ENCODE measurements at regions of chr16 and their contacts with region 1.

Region 1: DNA sequence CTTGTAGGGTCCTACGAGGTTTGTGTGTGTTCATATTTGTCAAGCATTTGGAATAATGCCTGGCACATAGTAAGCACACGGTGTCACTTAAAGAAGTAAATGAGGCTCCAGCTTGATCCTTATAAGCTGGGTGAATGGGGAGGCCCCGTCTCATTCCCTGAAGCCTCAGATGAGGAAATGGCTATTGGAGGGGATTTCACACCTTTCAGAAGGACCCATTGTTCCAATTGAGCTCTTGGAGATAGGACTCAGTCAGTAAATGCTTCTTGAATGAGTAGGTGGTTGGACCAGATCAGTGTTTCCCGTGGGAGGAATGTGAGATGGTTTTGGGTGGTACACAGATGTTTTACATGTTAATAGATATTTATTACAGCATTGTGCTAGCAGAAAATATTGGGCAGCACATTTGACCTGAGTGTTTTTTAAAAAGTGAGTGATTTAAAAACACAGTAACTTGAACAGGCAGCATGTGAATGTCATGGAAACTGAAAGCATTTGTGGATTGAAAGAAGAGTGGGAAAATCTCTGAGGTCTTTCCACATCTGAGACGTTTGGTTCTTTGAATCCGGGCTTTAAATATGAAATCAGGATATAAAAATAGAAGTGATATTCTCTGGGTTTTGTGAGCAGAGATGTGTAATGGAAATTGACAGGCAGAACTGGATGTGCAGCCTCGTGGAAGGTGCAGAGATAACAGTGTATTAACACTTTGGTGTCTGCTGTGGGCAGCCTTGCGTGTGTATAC is 36.4 kb upstream of the ARHGAP17 start:
- DNase-seq: no peak
- H3K4me3 Mint-ChIP-seq: no peak overlapping the region
- H3K27ac Mint-ChIP-seq: peak overlapping the region; percentile 23
- H3K4me1 Mint-ChIP-seq: peaks cover 20% of the 10 kb centered on the region
- H3K27me3 Mint-ChIP-seq: no peaks in the 10 kb centered on the region
- CTCF ChIP-seq: no peak

Region 2: GRCh38 chr16:24988593-24989338 is 62.8 kb before region 1 on chr16:
- CTCF ChIA-PET with region 1: no interaction called
- POLR2A ChIA-PET with region 1: interaction called, 13 read pairs
- intact Hi-C with region 1: loop called (anchors 2 kb)
- DNase-seq: peak; percentile 68
- H3K4me3 Mint-ChIP-seq: peak overlapping the region; percentile 56
- H3K27ac Mint-ChIP-seq: peak overlapping the region; percentile 79
- H3K4me1 Mint-ChIP-seq: peaks cover 60% of the 10 kb centered on the region
- H3K27me3 Mint-ChIP-seq: no peaks in the 10 kb centered on the region
- CTCF ChIP-seq: no peak

Region 3: GRCh38 chr16:25031441-25032307 is 19.9 kb before region 1 on chr16:
- CTCF ChIA-PET with region 1: interaction called, 8 read pairs
- POLR2A ChIA-PET with region 1: interaction called, 20 read pairs
- intact Hi-C with region 1: no loop called
- DNase-seq: peak; percentile 97
- H3K4me3 Mint-ChIP-seq: peak overlapping the region; percentile 94
- H3K27ac Mint-ChIP-seq: peak overlapping the region; percentile 88
- H3K4me1 Mint-ChIP-seq: peaks cover 5% of the 10 kb centered on the region
- H3K27me3 Mint-ChIP-seq: no peaks in the 10 kb centered on the region
- CTCF ChIP-seq: no peak

Region 4: DNA sequence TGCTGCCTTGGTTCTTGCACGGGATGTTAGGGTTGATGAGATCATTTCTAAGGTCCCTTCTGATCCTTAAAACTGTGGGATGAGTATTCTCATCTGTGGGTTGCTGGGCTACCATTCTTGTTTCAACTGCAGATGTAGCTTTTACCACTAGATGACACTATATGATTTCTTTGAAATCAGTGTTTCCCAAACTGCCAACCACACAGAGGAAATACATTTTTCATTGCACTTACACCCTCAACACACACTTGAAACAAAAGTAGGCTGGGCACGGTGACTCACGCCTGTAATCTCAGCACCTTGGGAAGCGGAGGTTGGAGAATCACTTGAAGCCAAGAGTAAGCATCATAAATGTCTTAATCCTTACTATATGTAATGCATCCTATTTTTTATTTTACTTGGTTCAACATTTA is 75.2 kb after region 1 on chr16:
- CTCF ChIA-PET with region 1: no interaction called
- POLR2A ChIA-PET with region 1: no interaction called
- intact Hi-C with region 1: loop called (anchors 1 kb)
- DNase-seq: peak; percentile 86
- H3K4me3 Mint-ChIP-seq: no peak overlapping the region
- H3K27ac Mint-ChIP-seq: no peak overlapping the region
- H3K4me1 Mint-ChIP-seq: peaks cover 15% of the 10 kb centered on the region
- H3K27me3 Mint-ChIP-seq: no peaks in the 10 kb centered on the region
- CTCF ChIP-seq: peak; percentile 58